KBM-7 (cell line): ENCODE measurements at regions of chr12 and their contacts with region 1.

Region 1: GRCh38 chr12:69900720-69901131 is 75.7 kb downstream of the MYRFL start:
- DNase-seq: peak; percentile 66

Region 2: GRCh38 chr12:69509308-69509736 is 391.4 kb before region 1 on chr12:
- in situ Hi-C with region 1: no loop called
- DNase-seq: no peak

Region 3: DNA sequence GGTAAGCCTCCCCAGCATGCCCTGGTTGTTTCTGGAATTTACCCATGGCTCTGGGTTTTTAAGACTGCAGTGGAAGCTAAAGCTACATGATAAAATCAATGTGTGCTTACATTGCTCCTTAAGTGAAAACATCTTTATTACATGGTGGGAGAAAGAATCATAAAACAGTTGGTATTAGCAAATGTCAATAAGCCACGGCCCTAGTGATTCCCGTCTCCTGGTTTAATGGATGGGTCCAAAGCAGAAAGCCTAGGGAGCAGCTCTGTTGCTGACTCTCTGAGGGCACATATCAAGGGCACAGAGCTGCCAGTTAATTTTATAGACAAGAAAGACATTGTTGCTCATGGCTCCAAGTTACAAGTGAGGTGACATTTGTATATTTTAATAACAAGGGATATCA is 52.2 kb after region 1 on chr12:
- in situ Hi-C with region 1: no loop called
- DNase-seq: no peak

Region 4: DNA sequence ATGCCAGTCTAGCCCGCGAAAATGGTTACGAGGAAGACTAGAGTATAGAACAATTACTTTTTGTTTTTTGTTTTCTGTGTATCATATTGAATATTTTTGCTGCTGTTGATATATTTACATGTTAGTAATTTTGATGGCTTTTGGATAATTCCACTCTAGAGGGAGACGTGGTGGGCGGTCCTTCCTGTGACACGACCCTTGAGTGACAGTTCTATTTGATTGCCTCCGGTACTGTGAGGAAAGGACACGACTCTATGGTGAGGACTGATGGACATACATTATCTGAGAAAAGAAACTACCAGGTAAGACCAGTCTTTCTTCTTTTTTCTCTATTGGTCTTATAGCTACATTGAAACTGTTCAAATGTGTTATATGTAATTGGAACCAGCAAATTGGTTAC is 377.2 kb after region 1 on chr12:
- in situ Hi-C with region 1: no loop called
- DNase-seq: no peak

Region 5: GRCh38 chr12:70549340-70550179 is 648.8 kb after region 1 on chr12:
- in situ Hi-C with region 1: loop called (anchors 25 kb)
- DNase-seq: no peak